Naive thymus-derived CD4-positive, alpha-beta T cell (primary cell): ENCODE measurements at regions of chr1 and their contacts with region 1.

Region 1: GRCh38 chr1:198651650-198652400 is 13.0 kb downstream of the PTPRC start:
- DNase-seq: no peak
- ATAC-seq: peak; percentile 34
- H3K4me3 ChIP-seq: peak overlapping the region; percentile 41
- H3K4me3 Mint-ChIP-seq: peak overlapping the region; percentile 77 to 92 (median 84)
- H3K27ac ChIP-seq: peak overlapping the region; percentile 94
- H3K27ac Mint-ChIP-seq: peak overlapping the region; percentile 83 to 98 (median 98)
- H3K4me1 ChIP-seq: peaks cover 62% of the 10 kb centered on the region in 2 donors
- H3K4me1 Mint-ChIP-seq: peaks cover 47 to 93% (median 73%) of the 10 kb centered on the region in 7 donors
- H3K27me3 ChIP-seq: no peaks in the 10 kb centered on the region
- H3K27me3 Mint-ChIP-seq: no peaks in the 10 kb centered on the region

Region 2: DNA sequence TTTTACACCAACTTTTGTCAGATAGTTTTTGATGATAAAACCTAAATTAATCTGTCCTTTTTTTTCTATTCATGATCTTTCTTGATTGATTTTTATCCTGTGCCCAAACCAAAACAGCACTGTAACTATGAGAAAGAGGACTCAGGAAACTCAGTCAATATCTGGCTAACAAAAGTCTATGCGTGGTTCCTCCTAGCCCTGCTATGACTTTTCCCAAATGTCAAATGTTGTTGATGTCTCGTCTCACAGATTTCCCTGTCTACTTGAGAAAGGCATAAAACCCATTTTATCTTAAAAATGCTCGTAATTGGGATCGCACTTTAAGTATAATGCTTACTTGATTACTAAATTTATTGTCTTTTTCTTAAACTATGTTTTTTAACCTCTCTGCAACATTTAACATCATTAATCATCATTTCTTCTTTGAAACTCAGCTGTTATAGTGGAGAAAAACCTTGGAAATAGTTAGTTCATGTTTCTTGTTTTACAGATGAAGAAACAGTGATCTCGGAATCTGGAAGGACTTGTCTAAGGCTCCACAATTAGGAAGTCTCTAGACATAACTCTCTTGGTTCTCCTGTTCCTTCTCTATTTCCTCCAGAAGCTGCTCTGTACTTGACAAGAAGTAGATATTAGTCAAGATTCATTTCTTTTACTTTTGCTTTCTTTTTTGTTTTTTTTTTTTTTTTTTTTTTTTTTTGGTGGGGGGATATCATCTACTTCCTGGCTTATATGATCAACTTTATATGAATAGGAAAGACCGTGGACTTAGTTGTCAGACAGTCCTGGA is 39.2 kb before region 1 on chr1:
- CTCF ChIA-PET with region 1: interaction called, 3 read pairs
- POLR2A ChIA-PET with region 1: interaction called, 9 read pairs
- intact Hi-C with region 1: loop called in 1 of 2 experiments (anchors 5 kb)
- DNase-seq: peak in 6 of 9 donors; percentile 30 to 52 (median 41)
- ATAC-seq: peak; percentile 62
- H3K4me3 ChIP-seq: peak overlapping the region; percentile 44
- H3K4me3 Mint-ChIP-seq: peak overlapping the region; percentile 66 to 97 (median 82)
- H3K27ac ChIP-seq: peak overlapping the region; percentile 82
- H3K27ac Mint-ChIP-seq: peak overlapping the region; percentile 95 to 100 (median 98)
- H3K4me1 ChIP-seq: peaks cover 56 to 71% of the 10 kb centered on the region in 2 donors
- H3K4me1 Mint-ChIP-seq: peaks cover 52 to 92% (median 73%) of the 10 kb centered on the region in 7 donors
- H3K27me3 ChIP-seq: no peaks in the 10 kb centered on the region
- H3K27me3 Mint-ChIP-seq: no peaks in the 10 kb centered on the region

Region 3: GRCh38 chr1:198633675-198634121 is 18.1 kb before region 1 on chr1:
- CTCF ChIA-PET with region 1: interaction called, 4 read pairs
- POLR2A ChIA-PET with region 1: interaction called, 53 read pairs
- intact Hi-C with region 1: no loop called
- DNase-seq: no peak
- ATAC-seq: peak; percentile 68
- H3K4me3 ChIP-seq: peak overlapping the region; percentile 3
- H3K4me3 Mint-ChIP-seq: peak overlapping the region in 9 of 10 donors; percentile 15 to 83 (median 43)
- H3K27ac ChIP-seq: no peak overlapping the region
- H3K27ac Mint-ChIP-seq: peak overlapping the region; percentile 60 to 98 (median 85)
- H3K4me1 ChIP-seq: peaks cover 70 to 86% of the 10 kb centered on the region in 2 donors
- H3K4me1 Mint-ChIP-seq: peaks cover 64 to 95% (median 84%) of the 10 kb centered on the region in 7 donors
- H3K27me3 ChIP-seq: no peaks in the 10 kb centered on the region
- H3K27me3 Mint-ChIP-seq: no peaks in the 10 kb centered on the region

Region 4: DNA sequence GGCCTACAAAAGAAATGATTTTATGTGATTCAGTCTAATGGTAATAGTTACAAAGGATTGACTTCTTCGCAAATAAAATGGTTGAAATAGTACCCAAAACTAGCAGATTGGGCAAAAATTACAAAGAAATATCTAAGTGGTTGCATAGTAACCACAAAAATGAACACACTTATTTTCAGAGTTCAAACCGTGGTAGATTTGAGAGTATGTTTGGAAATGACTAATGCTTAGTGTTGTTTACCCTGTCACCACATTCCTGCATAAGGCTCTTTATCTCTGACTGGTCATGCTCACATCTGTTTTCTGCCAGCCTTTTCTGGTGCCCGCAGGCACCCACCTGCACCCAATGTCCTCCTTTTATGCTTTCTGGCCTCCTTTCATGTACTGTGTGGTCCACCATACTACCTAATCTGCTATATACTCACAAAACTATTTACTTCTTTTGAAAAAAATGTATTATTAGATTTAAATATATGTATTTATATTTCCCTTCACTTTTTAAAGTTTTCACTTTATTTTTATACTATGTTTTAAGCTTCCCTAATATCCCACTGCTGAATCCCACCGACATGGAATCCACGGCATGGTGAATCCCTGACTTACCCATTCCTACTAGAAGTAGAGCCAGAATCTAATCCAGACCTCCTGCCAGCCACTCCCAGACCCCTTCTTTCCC is 17.3 kb after region 1 on chr1:
- CTCF ChIA-PET with region 1: interaction called, 6 read pairs
- POLR2A ChIA-PET with region 1: interaction called, 83 read pairs
- intact Hi-C with region 1: loop called (anchors 1 kb)
- DNase-seq: peak in 2 of 9 donors; percentile 46 to 53
- ATAC-seq: peak; percentile 81
- H3K4me3 ChIP-seq: peak overlapping the region; percentile 2
- H3K4me3 Mint-ChIP-seq: peak overlapping the region; percentile 48 to 78 (median 71)
- H3K27ac ChIP-seq: peak overlapping the region; percentile 75
- H3K27ac Mint-ChIP-seq: peak overlapping the region; percentile 74 to 98 (median 91)
- H3K4me1 ChIP-seq: peaks cover 79 to 86% of the 10 kb centered on the region in 2 donors
- H3K4me1 Mint-ChIP-seq: peaks cover 61 to 100% (median 95%) of the 10 kb centered on the region in 7 donors
- H3K27me3 ChIP-seq: no peaks in the 10 kb centered on the region
- H3K27me3 Mint-ChIP-seq: no peaks in the 10 kb centered on the region

Region 5: DNA sequence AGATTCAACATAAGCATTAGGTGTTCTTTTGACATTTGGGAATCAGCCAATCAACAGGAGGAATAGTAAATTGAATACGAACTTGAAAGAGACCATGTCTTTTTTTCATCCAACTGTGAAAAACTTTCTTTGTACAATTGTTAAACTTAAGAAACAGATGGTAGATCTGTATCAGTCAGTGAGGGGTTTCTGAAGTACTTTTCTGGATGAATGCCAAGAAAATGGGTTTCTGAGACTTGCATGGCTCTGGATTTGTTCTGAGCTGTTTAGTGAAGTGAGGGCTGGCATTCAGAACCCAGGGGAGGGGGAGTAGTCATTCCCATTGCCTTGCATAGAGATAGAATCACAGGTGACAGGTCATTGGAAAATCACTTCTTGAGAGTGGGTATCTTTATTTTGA is 24.4 kb after region 1 on chr1:
- CTCF ChIA-PET with region 1: interaction called, 4 read pairs
- POLR2A ChIA-PET with region 1: interaction called, 143 read pairs
- intact Hi-C with region 1: loop called in 1 of 2 experiments (anchors 1 kb)
- DNase-seq: peak in 6 of 9 donors; percentile 35 to 60 (median 56)
- ATAC-seq: peak; percentile 17
- H3K4me3 ChIP-seq: peak overlapping the region; percentile 18
- H3K4me3 Mint-ChIP-seq: peak overlapping the region; percentile 34 to 89 (median 82)
- H3K27ac ChIP-seq: peak overlapping the region; percentile 92
- H3K27ac Mint-ChIP-seq: peak overlapping the region; percentile 88 to 99 (median 98)
- H3K4me1 ChIP-seq: peaks cover 94 to 97% of the 10 kb centered on the region in 2 donors
- H3K4me1 Mint-ChIP-seq: peaks cover 60 to 98% (median 87%) of the 10 kb centered on the region in 7 donors
- H3K27me3 ChIP-seq: no peaks in the 10 kb centered on the region
- H3K27me3 Mint-ChIP-seq: no peaks in the 10 kb centered on the region

Region 6: DNA sequence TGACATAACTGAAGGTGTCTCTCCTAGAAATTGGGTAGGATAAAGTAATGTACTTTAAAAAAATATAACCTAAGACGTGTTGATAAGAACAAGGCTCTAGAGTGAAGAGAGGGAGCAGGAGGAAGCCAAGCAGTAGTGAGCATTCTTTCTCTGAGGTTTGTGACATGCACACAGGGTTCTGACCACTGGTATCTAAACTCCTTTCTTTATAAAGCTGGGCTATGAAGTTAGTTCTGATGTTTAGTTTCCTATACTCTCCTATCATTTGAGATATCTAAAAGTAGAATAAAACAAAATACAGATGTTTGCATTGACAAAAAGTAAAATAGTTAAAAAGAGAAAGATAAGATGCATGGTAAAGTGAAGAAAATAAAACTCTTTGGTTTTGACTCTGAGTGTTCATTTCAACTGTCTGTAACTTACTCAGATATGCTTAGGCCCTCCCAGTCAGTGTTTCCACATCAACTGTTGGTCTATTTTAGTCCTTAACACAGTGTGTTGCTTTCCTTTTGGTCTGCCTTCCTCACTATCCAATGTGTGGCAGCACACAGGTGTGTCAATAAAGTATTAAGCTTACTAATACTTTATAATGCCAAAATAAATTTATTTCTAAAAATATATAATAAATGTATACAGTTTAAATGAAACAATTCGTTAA is 530.5 kb after region 1 on chr1:
- CTCF ChIA-PET with region 1: no interaction called
- POLR2A ChIA-PET with region 1: no interaction called
- intact Hi-C with region 1: no loop called
- DNase-seq: no peak
- ATAC-seq: no peak
- H3K4me3 ChIP-seq: no peak overlapping the region
- H3K4me3 Mint-ChIP-seq: no peak overlapping the region
- H3K27ac ChIP-seq: no peak overlapping the region
- H3K27ac Mint-ChIP-seq: no peak overlapping the region
- H3K4me1 ChIP-seq: no peaks in the 10 kb centered on the region
- H3K4me1 Mint-ChIP-seq: peaks cover 0 to 9% (median 0%) of the 10 kb centered on the region in 7 donors
- H3K27me3 ChIP-seq: no peaks in the 10 kb centered on the region
- H3K27me3 Mint-ChIP-seq: peaks cover 0 to 14% (median 0%) of the 10 kb centered on the region in 5 donors